Esophagus muscularis mucosa (tissue), 4 donors: ENCODE measurements at regions of chr1 and their contacts with region 1.

Region 1: DNA sequence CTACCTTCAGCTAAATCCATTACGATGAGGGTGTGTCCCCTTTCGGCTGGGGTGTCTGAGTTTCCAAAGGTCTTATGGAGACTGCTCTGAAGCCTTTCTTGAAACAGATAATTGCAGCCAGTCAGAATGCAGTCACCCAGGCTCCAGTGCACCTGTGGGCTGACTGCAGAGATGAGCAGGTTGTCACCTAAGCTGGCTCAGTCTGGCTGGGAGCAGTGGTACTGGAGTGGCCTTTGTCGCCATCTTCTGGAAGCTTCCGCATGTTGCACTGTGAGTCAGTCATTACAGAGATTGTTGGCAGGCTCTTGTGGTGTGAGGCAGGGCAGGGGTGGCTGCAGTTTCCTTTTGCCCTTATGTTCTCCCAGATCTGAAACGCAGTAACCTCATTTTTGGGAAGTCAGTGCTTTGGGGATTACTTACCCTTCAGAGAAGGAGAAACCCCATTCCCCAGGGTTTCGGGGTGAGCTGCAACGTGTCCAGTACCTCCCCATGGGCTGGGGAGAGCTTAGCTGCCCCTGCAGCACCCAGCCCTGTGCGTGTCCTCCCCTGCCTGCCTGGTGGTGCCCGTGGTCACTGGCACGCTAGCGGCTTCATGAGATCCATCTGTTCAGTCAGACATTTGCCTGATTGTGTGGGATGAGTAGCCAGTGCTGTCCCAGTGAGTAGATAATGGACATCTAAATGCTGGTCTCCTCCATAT is 48.0 kb downstream of the SMYD2 start:
- DNase-seq: no peak
- H3K4me3 ChIP-seq: no peak overlapping the region
- H3K27ac ChIP-seq: no peak overlapping the region
- H3K4me1 ChIP-seq: peaks cover 7 to 20% (median 12%) of the 10 kb centered on the region in 4 donors
- H3K27me3 ChIP-seq: no peaks in the 10 kb centered on the region
- CTCF ChIP-seq: peak; percentile 88 to 94 (median 91)
- EP300 ChIP-seq: no peak
- POLR2A ChIP-seq: no peak

Region 2: GRCh38 chr1:214215583-214215982 is 113.3 kb before region 1 on chr1:
- intact Hi-C with region 1: loop called (anchors 2 kb)
- DNase-seq: no peak
- H3K4me3 ChIP-seq: no peak overlapping the region
- H3K27ac ChIP-seq: no peak overlapping the region
- H3K4me1 ChIP-seq: peaks cover 0 to 5% (median 5%) of the 10 kb centered on the region in 4 donors
- H3K27me3 ChIP-seq: peaks cover 0 to 10% (median 4%) of the 10 kb centered on the region in 4 donors
- CTCF ChIP-seq: no peak
- EP300 ChIP-seq: no peak
- POLR2A ChIP-seq: no peak

Region 3: GRCh38 chr1:214261206-214262123 is 67.5 kb before region 1 on chr1:
- intact Hi-C with region 1: loop called (anchors 1 kb)
- DNase-seq: no peak
- H3K4me3 ChIP-seq: no peak overlapping the region
- H3K27ac ChIP-seq: no peak overlapping the region
- H3K4me1 ChIP-seq: peaks cover 2 to 7% (median 5%) of the 10 kb centered on the region in 4 donors
- H3K27me3 ChIP-seq: peaks cover 0 to 69% (median 3%) of the 10 kb centered on the region in 4 donors
- CTCF ChIP-seq: peak in 2 of 3 experiments; percentile 91 to 92
- EP300 ChIP-seq: peak; percentile 3
- POLR2A ChIP-seq: no peak

Region 4: GRCh38 chr1:214551436-214552173 is 222.7 kb after region 1 on chr1 and contains the start of gene PTPN14:
- intact Hi-C with region 1: loop called (anchors 10 kb)
- DNase-seq: peak; percentile 95
- H3K4me3 ChIP-seq: peak within 1 kb of the TSS; percentile 67 to 91 (median 80)
- H3K27ac ChIP-seq: peak within 1 kb of the TSS; percentile 93 to 99 (median 97)
- H3K4me1 ChIP-seq: peaks cover 23 to 55% (median 45%) of the 10 kb centered on the region in 4 donors
- H3K27me3 ChIP-seq: no peaks in the 10 kb centered on the region
- CTCF ChIP-seq: peak in 2 of 3 experiments; percentile 21 to 56
- EP300 ChIP-seq: no peak
- POLR2A ChIP-seq: peak; percentile 50
- total RNA-seq, gene PTPN14: 48.5 to 108 (median 69.1) TPM

Region 5: GRCh38 chr1:214584805-214585766 is 256.2 kb after region 1 on chr1:
- intact Hi-C with region 1: loop called (anchors 1 kb)
- DNase-seq: no peak
- H3K4me3 ChIP-seq: no peak overlapping the region
- H3K27ac ChIP-seq: no peak overlapping the region
- H3K4me1 ChIP-seq: peaks cover 0 to 3% (median 0%) of the 10 kb centered on the region in 4 donors
- H3K27me3 ChIP-seq: no peaks in the 10 kb centered on the region
- CTCF ChIP-seq: peak; percentile 74 to 81 (median 79)
- EP300 ChIP-seq: no peak
- POLR2A ChIP-seq: no peak